ENCODE measurements at regions of chr1 and their contacts with region 1.

Region 1: DNA sequence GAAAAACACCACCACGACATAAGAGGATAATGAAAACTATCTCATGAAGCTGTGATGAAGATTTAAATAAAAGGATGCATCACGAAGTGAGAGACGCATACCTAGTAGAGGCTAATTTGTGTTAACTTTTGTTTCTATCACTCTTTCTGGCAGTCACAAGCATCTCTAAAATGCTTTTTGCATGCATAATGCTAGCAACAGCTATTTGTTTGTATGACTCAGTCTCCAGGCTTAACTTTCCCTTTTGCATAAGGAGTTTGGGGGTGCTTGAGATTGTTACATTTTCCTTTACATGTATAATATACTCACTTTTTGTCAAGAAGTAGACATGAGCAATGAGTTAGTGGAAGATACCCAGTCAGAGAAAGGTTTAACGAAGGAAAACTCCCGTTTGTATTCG is 385.4 kb downstream of the DISC1 start:
- DNase-seq: peak; percentile 39
- H3K4me3 ChIP-seq: no peak overlapping the region
- H3K27ac ChIP-seq: peak overlapping the region; percentile 84
- H3K27me3 ChIP-seq: no peaks in the 10 kb centered on the region
- CTCF ChIP-seq: no peak

Region 2: GRCh38 chr1:231383159-231383860 is 628.7 kb before region 1 on chr1:
- CTCF ChIA-PET with region 1: no interaction called
- POLR2A ChIA-PET with region 1: interaction called, 12 read pairs
- DNase-seq: no peak
- H3K4me3 ChIP-seq: no peak overlapping the region
- H3K27ac ChIP-seq: no peak overlapping the region
- H3K27me3 ChIP-seq: no peaks in the 10 kb centered on the region
- CTCF ChIP-seq: no peak

Measured in AG04450 (cell line).